Activated CD4-positive, alpha-beta T cell treated with anti-CD3 and anti-CD28 coated beads for 36 hours (primary cell): ENCODE measurements at regions of chr19 and their contacts with region 1.

Region 1: GRCh38 chr19:16076154-16076957 is at the start of gene TPM4:
- DNase-seq: peak; percentile 94
- ATAC-seq: peak; percentile 42
- H3K4me3 Mint-ChIP-seq: peak within 1 kb of the TSS; percentile 99
- H3K27ac Mint-ChIP-seq: peak within 1 kb of the TSS; percentile 98
- H3K4me1 Mint-ChIP-seq: peaks cover 64% of the 10 kb centered on the region
- H3K27me3 Mint-ChIP-seq: no peaks in the 10 kb centered on the region
- total RNA-seq, gene TPM4: 362 to 416 TPM

Region 2: GRCh38 chr19:14366498-14366915 is 1709.8 kb before region 1 on chr19:
- CTCF ChIA-PET with region 1: no interaction called
- POLR2A ChIA-PET with region 1: no interaction called
- intact Hi-C with region 1: loop called in 1 of 2 experiments (anchors 10 kb)
- DNase-seq: peak; percentile 95
- ATAC-seq: peak; percentile 50
- H3K4me3 Mint-ChIP-seq: peak overlapping the region; percentile 45
- H3K27ac Mint-ChIP-seq: peak overlapping the region; percentile 100
- H3K4me1 Mint-ChIP-seq: peaks cover 78% of the 10 kb centered on the region
- H3K27me3 Mint-ChIP-seq: no peaks in the 10 kb centered on the region

Region 3: GRCh38 chr19:15379083-15379995 is 697.0 kb before region 1 on chr19 and contains the start of gene AKAP8:
- CTCF ChIA-PET with region 1: no interaction called
- POLR2A ChIA-PET with region 1: no interaction called
- intact Hi-C with region 1: loop called in 1 of 2 experiments (anchors 1 kb)
- DNase-seq: peak; percentile 99
- ATAC-seq: peak; percentile 91
- H3K4me3 Mint-ChIP-seq: peak within 1 kb of the TSS; percentile 88
- H3K27ac Mint-ChIP-seq: peak within 1 kb of the TSS; percentile 100
- H3K4me1 Mint-ChIP-seq: peaks cover 37% of the 10 kb centered on the region
- H3K27me3 Mint-ChIP-seq: no peaks in the 10 kb centered on the region
- total RNA-seq, gene AKAP8: 47.9 to 54.3 TPM

Region 4: GRCh38 chr19:15759962-15760565 is 316.3 kb before region 1 on chr19:
- CTCF ChIA-PET with region 1: no interaction called
- POLR2A ChIA-PET with region 1: no interaction called
- intact Hi-C with region 1: no loop called
- DNase-seq: peak; percentile 18
- ATAC-seq: no peak
- H3K4me3 Mint-ChIP-seq: no peak overlapping the region
- H3K27ac Mint-ChIP-seq: no peak overlapping the region
- H3K4me1 Mint-ChIP-seq: no peaks in the 10 kb centered on the region
- H3K27me3 Mint-ChIP-seq: peaks cover 47% of the 10 kb centered on the region

Region 5: GRCh38 chr19:15986701-15987100 is 89.7 kb before region 1 on chr19:
- CTCF ChIA-PET with region 1: no interaction called
- POLR2A ChIA-PET with region 1: no interaction called
- intact Hi-C with region 1: no loop called
- DNase-seq: no peak
- ATAC-seq: no peak
- H3K4me3 Mint-ChIP-seq: no peak overlapping the region
- H3K27ac Mint-ChIP-seq: no peak overlapping the region
- H3K4me1 Mint-ChIP-seq: peaks cover 1% of the 10 kb centered on the region
- H3K27me3 Mint-ChIP-seq: peaks cover 20% of the 10 kb centered on the region

Region 6: DNA sequence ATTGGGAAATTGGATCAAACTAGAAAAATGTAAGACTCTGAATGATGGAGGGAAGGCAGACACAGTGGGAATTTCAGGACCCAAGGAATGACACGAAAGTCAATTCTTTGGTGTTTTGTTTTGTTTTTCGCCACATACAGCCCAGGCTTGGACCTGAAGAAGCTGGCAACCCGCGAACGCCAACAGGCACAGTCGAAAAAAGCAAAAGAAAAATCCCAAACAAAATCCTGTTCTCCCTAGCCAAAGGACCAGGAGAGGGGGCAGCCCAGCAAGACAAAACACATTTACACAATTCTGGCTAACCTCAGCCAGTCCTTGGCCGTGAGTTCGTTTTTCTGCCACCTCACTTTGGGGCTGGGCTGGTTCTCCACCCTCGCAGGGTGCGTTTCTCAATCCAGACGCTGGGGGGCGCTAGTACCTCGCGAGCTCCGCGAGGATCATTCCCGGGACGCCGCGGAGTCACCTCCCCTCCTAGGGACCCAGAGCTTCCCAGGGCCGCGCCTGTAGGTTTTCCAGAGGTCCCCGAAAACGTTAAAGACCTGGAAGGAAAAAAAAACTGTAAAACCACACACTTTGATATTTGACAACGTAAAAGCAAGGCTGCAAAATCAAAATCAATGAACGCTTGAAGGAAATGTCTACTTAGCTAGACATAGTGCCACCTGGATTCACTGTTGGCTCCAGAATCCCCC is 34.9 kb before region 1 on chr19:
- CTCF ChIA-PET with region 1: interaction called, 4 read pairs
- POLR2A ChIA-PET with region 1: no interaction called
- intact Hi-C with region 1: loop called in 1 of 2 experiments (anchors 2 kb)
- DNase-seq: peak; percentile 87
- ATAC-seq: peak; percentile 85
- H3K4me3 Mint-ChIP-seq: no peak overlapping the region
- H3K27ac Mint-ChIP-seq: no peak overlapping the region
- H3K4me1 Mint-ChIP-seq: peaks cover 4% of the 10 kb centered on the region
- H3K27me3 Mint-ChIP-seq: peaks cover 2% of the 10 kb centered on the region

Region 7: GRCh38 chr19:16185123-16185767 is 108.9 kb after region 1 on chr19 and contains the start of gene FAM32A:
- CTCF ChIA-PET with region 1: interaction called, 13 read pairs
- POLR2A ChIA-PET with region 1: interaction called, 10 read pairs
- intact Hi-C with region 1: loop called in 1 of 2 experiments (anchors 1 kb)
- DNase-seq: peak; percentile 99
- ATAC-seq: peak; percentile 98
- H3K4me3 Mint-ChIP-seq: peak within 1 kb of the TSS; percentile 100
- H3K27ac Mint-ChIP-seq: peak within 1 kb of the TSS; percentile 97
- H3K4me1 Mint-ChIP-seq: peaks cover 26% of the 10 kb centered on the region
- H3K27me3 Mint-ChIP-seq: no peaks in the 10 kb centered on the region
- total RNA-seq, gene FAM32A: 46.3 to 48.2 TPM

Region 8: GRCh38 chr19:16584248-16585141 is 508.1 kb after region 1 on chr19:
- CTCF ChIA-PET with region 1: no interaction called
- POLR2A ChIA-PET with region 1: no interaction called
- intact Hi-C with region 1: loop called in 1 of 2 experiments (anchors 5 kb)
- DNase-seq: peak; percentile 94
- ATAC-seq: peak; percentile 79
- H3K4me3 Mint-ChIP-seq: peak overlapping the region; percentile 79
- H3K27ac Mint-ChIP-seq: peak overlapping the region; percentile 95
- H3K4me1 Mint-ChIP-seq: peaks cover 76% of the 10 kb centered on the region
- H3K27me3 Mint-ChIP-seq: no peaks in the 10 kb centered on the region